GM10248 (cell line): ENCODE measurements at regions of chr17 and their contacts with region 1.

Region 1: DNA sequence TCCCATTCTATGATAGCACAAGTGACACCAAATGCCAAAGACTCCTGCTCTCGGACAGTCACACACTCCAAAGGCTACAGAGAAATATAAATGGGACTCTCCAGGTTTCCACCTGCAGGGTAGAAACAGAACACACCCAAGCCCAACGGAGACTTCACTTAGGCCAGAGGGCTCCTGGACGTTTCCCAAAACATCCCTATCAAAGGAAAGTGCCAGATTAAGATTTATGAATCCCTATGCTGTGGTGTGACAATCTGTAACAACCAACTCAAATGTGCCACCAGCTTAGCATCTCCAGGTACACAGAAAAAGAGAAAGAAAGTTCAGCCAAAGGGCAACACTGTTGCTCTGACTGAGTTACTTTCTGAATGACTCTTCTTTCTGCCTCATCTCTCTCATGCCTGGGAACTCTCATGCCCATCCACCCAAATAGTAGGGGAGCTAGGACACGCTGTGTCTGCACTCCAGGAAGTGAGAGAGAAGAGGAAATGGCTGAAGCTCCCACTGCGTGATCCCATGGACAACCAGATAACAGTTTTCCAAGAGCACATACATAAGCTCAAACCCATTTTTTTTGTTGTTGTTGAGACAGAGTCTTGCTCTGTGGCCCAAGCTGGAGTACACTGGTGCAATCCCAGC is 49.7 kb downstream of the SMG6 start:
- DNase-seq: peak; percentile 81
- CTCF ChIP-seq: no peak

Region 2: DNA sequence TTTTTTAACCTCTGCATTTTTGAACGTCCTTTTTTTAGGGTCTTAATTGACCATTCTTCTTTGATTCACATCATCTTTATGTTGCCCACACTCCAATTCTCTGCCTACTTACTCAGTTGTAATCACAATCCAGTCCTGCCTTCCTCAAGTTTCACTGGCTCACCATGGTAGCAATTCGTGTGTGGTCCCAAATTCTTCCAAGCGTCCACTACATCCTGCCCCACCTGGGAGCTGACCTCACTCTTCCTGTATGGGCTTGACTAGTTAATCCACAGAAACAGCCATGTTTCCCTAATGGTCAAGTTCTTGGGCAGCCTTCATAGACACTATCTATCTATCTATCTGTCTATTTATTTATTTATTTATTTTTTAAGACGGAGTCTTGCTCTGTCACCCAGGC is 550.8 kb before region 1 on chr17:
- CTCF ChIA-PET with region 1: no interaction called
- POLR2A ChIA-PET with region 1: no interaction called
- DNase-seq: no peak
- CTCF ChIP-seq: no peak

Region 3: DNA sequence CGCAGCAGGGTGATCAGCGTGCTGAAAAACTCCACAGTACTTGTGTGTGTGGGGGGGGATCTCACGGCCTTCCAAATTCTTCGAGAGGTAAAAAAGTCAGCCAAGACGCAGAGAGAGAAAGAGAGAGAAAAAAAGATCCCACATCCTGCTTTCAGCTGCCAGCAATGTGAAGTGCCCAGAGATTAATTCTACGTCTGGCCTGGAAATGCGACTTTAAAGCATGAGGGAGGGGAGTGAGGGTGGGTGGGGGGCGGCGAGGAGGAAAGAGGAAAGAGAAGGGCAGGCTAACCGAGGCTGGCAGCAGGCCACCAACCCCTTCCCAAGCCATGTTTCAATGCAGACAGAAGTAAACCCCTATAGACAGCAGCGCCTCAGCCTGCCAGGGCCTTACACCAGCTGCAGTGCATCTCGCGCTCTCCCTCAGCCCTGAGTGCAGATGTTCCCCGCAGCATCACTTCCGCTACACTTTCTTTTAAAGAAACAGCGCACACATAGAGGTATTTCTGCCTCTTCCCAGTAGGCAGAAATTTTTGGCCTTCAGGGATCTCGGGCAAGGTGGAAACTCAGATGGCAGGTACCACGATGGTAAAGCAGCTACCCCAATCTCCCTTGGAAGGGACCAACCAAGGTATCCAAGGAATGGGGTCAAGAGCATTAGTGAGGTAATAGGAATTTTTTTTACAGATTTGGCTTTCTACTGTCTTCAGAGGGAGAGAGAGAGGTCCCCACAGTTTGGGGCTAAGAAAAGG is 38.1 kb before region 1 on chr17:
- CTCF ChIA-PET with region 1: no interaction called
- POLR2A ChIA-PET with region 1: no interaction called
- DNase-seq: peak; percentile 83
- CTCF ChIP-seq: no peak

Region 4: DNA sequence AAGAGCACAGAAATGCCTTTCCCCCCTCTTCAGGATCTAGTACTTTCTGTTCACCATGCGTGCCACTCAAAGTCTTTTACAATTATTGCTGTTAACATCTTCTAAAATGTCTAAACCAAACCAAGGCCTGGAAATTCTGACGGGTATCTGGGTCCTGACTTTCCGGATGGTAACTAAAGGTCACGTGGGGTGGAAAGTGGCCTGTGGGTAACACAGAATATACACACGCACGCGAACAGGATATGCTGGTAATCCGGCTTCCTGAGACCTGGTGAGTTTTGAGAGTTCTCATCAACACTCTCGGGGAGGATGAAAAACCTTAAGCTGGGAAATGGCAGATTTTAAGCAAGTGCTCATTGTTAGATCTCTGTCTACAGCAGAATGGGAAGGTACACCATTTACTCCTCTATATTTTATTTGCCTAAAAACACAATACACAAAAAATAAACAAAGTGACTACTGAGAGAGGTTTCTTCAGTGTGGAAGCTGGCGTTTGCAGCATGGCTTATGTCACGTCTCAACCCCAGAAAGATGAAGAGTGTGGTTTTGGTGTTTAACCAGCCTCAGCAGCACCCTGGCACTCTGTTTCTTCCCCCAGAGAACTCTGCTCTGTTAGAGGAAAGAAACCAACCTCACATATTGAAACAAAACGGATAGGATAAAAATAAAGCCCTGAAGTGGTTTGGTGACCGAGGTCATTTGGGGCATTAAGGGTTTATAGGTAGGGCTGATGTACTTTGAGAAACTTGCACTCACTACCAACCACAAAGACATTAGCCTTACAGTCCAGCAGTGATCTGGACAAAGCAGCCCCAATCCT is 12.4 kb after region 1 on chr17:
- CTCF ChIA-PET with region 1: interaction called, 16 read pairs
- POLR2A ChIA-PET with region 1: interaction called, 8 read pairs
- DNase-seq: peak; percentile 55
- CTCF ChIP-seq: no peak

Region 5: DNA sequence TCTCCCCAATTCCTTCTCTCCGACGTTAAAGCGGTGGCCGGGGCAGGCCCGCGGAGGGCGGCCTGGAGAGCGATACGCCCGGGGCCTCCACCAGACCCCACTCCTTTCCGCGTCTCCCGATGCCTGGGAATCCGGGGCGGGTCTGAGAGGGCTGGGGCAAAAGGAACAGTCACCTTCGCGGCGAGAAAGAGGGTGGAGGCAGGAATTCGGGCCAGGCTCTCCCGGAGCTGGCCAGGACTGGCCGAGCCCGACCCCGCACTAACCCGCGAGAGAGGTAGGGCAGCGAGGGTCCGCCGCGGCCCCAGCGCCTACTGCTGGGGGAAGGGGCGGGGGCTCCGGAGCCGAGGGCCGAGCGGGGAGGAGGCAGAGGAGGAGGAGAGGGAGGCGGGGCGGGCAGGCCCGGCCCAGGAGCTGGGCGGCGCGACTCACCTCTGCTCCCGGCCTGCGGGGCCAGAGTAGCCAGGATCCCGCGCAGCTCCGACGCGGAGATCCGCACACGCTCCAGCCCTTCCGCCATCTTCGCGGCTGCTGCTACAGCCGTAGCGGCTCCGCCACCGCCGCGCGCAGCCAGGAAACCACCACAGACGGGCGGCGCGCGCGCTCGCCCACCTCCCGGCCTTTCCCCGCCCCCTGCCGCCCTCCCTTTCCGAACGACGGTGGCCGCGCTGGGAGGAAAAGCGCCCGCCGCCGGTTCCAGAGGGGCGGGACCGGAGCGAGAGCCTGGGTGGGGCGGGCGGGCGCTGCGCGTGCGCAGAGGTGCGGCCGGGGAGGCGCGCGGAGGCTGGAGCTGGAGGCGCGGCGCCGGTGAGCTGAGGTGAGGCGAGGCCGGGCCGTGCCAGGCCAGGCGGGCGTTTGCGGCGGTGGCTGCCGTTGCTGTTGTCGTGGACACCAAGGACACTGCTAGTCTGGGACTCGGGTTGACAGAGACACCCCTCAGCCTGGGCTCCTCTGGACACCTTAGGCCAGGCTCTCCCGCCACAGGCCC is 49.6 kb after region 1 on chr17 and contains the starts of genes SMG6 and SRR:
- CTCF ChIA-PET with region 1: no interaction called
- POLR2A ChIA-PET with region 1: no interaction called
- DNase-seq: peak; percentile 99
- CTCF ChIP-seq: no peak